ENCODE measurements at regions of chr22 and their contacts with region 1.

Region 1: GRCh38 chr22:22787786-22788459 is 99.7 kb upstream of the IGLL5 start:
- DNase-seq: peak; percentile 55 to 75 (median 69)
- H3K4me3 ChIP-seq: no peak overlapping the region
- H3K27ac ChIP-seq: no peak overlapping the region
- H3K4me1 ChIP-seq: peaks cover 0 to 3% (median 0%) of the 10 kb centered on the region in 4 experiments
- H3K27me3 ChIP-seq: peaks cover 0 to 1% (median 0%) of the 10 kb centered on the region in 5 experiments

Region 2: DNA sequence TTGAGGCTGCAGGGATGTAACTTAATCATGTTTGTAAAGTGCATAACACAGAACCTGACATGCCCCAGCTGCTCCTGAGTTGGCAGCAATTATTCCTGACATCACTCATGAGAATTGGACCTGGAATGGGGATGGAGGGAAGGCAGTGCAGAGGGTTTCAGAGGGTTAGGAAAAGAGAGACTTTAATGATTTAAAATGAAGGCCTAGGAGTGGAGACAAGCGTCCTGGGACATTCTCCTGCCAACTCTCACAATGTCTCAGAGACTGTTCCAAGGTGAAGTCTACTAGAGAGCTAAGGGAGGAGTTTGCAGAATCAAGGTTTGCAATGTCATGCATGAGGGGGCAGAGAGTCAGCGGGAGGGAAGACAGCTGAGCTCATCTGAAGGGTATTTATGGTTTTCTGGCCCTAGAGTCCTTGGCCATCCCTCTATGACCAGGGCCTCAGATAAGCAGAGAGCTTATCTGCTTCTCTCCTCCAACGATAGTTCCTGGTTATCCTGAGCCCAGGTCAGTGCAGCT is 106.6 kb before region 1 on chr22:
- CTCF ChIA-PET with region 1: no interaction called
- POLR2A ChIA-PET with region 1: no interaction called
- DNase-seq: no peak
- H3K4me3 ChIP-seq: no peak overlapping the region
- H3K27ac ChIP-seq: no peak overlapping the region
- H3K4me1 ChIP-seq: peaks cover 0 to 1% (median 0%) of the 10 kb centered on the region in 4 experiments
- H3K27me3 ChIP-seq: no peaks in the 10 kb centered on the region

Region 3: DNA sequence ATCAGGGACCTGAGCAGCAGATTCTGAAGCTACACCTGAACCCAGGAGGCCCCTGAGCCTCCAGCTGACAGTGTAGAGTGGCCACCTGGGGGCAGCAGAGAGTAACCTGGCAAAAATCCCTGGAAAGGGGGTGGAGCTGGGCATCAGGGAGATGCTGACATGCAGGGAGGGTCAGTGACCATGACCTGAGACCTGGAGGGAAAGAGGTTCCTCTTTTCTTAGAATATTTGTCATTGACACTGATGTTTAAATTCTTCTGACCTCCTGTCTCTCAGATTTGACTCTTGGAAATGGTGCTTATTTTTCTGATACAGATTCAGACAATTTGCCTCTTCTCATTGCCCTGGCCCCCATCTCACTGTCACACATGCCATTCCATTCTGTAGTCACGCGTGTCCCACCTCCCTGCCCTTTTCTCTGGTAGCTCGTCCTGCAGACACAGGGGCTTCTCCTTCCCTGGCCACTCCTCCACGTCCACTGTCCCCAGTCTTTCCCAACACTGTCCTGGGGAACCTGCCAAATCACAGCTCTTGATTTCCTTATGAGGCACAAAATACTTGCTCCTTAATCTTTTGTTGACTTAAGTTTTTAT is 17.5 kb before region 1 on chr22:
- CTCF ChIA-PET with region 1: interaction called, 10 read pairs
- POLR2A ChIA-PET with region 1: no interaction called
- DNase-seq: peak; percentile 36 to 56 (median 47)
- H3K4me3 ChIP-seq: no peak overlapping the region
- H3K27ac ChIP-seq: no peak overlapping the region
- H3K4me1 ChIP-seq: no peaks in the 10 kb centered on the region
- H3K27me3 ChIP-seq: peaks cover 0 to 7% (median 5%) of the 10 kb centered on the region in 5 experiments

Region 4: DNA sequence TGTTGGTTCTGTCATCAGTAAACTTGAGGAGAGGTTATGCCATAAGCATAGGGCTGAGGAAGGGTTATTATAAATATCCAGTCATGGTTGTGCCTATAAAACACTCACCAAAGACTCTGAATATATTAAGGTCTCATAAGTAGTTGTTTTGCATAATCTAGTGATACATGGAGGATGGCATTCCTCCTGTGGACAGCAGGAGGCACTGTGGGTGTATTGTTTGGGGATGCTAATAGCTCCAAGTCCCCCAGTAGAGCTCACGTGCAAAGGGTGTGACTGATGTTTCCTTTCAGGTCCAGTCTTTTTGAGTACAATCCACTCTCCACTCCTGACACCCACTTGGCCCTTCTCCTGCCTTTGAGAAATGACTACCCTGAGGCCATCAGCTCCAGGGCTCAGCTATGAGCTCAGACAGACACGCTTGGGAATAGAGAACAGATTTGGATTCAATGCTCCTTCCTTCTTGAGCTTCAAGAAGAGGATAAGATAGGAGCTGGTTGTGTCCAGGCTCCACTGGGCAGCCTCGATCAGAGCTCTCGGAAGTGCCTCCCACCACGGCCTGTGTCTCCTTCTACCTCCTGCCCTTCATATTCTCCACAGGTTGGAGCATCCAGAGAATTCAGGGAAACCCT is 14.5 kb after region 1 on chr22:
- CTCF ChIA-PET with region 1: interaction called, 18 read pairs
- POLR2A ChIA-PET with region 1: no interaction called
- DNase-seq: peak; percentile 48 to 72 (median 65)
- H3K4me3 ChIP-seq: no peak overlapping the region
- H3K27ac ChIP-seq: no peak overlapping the region
- H3K4me1 ChIP-seq: peaks cover 0 to 3% (median 0%) of the 10 kb centered on the region in 4 experiments
- H3K27me3 ChIP-seq: peaks cover 0 to 5% (median 0%) of the 10 kb centered on the region in 5 experiments

Region 5: DNA sequence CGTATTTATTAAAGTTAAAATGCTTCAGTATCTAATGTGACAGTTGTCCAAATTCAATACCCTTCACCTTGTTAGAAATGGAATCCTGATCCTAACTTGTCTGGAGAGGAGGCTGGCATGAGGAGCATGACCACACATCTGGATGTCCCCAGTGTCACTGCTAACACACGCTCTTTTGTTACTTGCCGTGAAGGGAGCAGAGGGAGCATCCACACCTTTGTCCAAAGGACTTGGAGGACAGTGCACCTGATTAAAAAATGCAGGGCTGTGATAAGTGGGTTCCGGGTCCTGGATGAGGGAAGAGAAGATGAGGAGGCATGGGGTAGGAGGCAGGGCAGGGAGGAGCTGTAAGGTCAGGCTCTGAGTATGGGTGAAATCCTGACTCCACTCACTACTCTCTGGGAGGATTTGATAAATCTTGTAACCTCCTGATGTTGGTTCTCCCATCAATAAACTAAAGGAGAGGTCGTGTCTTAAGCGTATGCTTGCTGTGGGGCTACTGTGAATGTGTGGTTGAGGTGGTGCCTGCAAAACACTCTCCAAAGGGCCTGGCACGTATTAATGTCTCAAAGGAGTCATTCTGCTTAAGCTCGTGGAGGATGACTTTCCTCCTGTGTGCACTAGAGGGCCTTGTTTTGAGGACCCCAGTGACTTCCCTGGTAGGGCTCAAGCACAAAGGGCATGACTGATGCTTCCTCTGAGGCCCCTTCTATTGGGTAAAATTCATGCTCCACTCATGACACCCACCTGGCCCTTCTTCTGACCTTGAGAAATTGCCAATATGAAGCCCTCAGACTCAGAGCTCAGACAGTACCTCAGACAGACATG is 82.9 kb after region 1 on chr22:
- CTCF ChIA-PET with region 1: interaction called, 11 read pairs
- POLR2A ChIA-PET with region 1: no interaction called
- DNase-seq: peak in 2 of 3 donors; percentile 47 to 49
- H3K4me3 ChIP-seq: no peak overlapping the region
- H3K27ac ChIP-seq: no peak overlapping the region
- H3K4me1 ChIP-seq: peaks cover 0 to 11% (median 1%) of the 10 kb centered on the region in 4 experiments
- H3K27me3 ChIP-seq: no peaks in the 10 kb centered on the region

Region 6: GRCh38 chr22:22877523-22878210 is 89.7 kb after region 1 on chr22:
- CTCF ChIA-PET with region 1: interaction called, 17 read pairs
- POLR2A ChIA-PET with region 1: no interaction called
- DNase-seq: peak; percentile 56 to 74 (median 68)
- H3K4me3 ChIP-seq: no peak overlapping the region
- H3K27ac ChIP-seq: no peak overlapping the region
- H3K4me1 ChIP-seq: peaks cover 0 to 6% (median 0%) of the 10 kb centered on the region in 4 experiments
- H3K27me3 ChIP-seq: peaks cover 0 to 3% (median 0%) of the 10 kb centered on the region in 5 experiments

Region 7: GRCh38 chr22:22923379-22923778 is 135.5 kb after region 1 on chr22:
- CTCF ChIA-PET with region 1: no interaction called
- POLR2A ChIA-PET with region 1: no interaction called
- DNase-seq: no peak
- H3K4me3 ChIP-seq: no peak overlapping the region
- H3K27ac ChIP-seq: no peak overlapping the region
- H3K4me1 ChIP-seq: peaks cover 0 to 24% (median 9%) of the 10 kb centered on the region in 4 experiments
- H3K27me3 ChIP-seq: no peaks in the 10 kb centered on the region